Esophagus squamous epithelium (tissue), 5 donors: ENCODE measurements at regions of chr7 and their contacts with region 1.

Region 1: GRCh38 chr7:48109848-48110663 is 21.0 kb downstream of the UPP1 start:
- DNase-seq: peak; percentile 32
- H3K4me3 ChIP-seq: no peak overlapping the region
- H3K27ac ChIP-seq: peak overlapping the region in 1 of 4 donors; percentile 3
- H3K4me1 ChIP-seq: peaks cover 0 to 26% (median 4%) of the 10 kb centered on the region in 3 donors
- H3K27me3 ChIP-seq: no peaks in the 10 kb centered on the region
- CTCF ChIP-seq: peak; percentile 94 to 100 (median 99)
- POLR2A ChIP-seq: no peak

Region 2: DNA sequence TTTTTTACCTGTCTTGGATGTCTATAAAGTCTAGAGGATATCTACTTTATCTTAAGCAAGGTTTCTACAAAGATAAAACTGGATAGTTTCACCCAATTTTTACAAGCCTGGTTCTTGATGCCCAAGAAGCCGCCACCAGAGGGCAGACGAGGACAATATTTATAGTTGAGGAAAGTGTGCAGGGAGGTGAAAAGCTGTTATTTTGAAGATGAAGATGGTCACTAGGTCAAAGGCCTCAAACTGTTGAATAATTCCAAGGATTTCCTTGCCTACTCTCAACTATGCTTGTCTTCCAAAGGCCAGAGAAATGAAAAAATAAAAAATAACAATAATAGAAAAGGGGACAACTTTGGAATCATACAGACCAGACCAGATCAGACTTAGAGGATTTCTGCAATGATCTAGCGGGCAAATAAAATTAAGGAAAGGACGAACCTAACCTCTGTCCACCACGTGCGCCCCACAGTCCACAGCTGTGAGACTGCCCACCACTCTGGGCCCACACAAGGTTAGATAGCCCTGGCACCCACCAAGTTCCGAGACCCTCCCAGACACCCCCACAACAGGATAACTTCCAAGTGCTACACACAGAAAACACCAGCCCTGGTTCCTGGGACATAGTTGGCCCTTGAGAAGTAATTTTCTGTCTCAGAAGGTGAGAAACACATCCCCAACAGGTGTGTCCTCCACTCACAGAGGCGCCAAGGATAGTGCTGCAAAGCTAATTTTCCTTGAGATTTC is 164.6 kb before region 1 on chr7:
- intact Hi-C with region 1: loop called (anchors 5 kb)
- DNase-seq: no peak
- H3K4me3 ChIP-seq: no peak overlapping the region
- H3K27ac ChIP-seq: no peak overlapping the region
- H3K4me1 ChIP-seq: peaks cover 0 to 26% (median 9%) of the 10 kb centered on the region in 3 donors
- H3K27me3 ChIP-seq: no peaks in the 10 kb centered on the region
- CTCF ChIP-seq: peak; percentile 54 to 83 (median 76)
- POLR2A ChIP-seq: no peak

Region 3: DNA sequence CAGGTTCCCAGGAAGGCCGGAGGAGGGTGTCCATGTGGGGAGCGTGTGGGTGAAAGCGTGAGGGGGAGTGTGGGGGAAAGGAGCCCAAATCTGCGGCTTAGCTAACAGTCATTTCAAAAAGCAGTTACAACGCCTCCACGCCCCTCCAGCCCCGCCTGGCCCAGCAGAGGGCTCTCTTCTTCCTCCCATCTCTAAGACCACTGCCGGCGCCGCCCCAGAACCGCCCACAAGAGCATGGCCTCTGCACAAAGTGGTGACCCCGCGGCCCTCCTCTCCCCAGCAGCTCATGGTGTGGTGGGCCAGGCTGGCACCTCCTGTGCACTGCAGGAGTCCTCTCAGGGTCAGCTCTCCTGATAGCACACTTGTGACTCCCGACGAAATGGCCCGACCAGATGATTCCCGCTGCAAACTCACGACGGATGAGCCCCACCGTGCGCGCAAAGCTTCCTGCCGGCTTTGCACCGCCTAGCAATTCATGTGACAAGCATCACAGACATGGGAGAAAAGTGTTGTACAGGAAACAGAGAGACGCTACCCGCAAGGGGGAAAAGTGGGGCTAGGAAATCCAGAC is 118.2 kb before region 1 on chr7:
- intact Hi-C with region 1: loop called (anchors 10 kb)
- DNase-seq: peak; percentile 71
- H3K4me3 ChIP-seq: peak overlapping the region; percentile 27 to 71 (median 50)
- H3K27ac ChIP-seq: peak overlapping the region; percentile 31 to 70 (median 52)
- H3K4me1 ChIP-seq: peaks cover 0 to 18% (median 0%) of the 10 kb centered on the region in 3 donors
- H3K27me3 ChIP-seq: no peaks in the 10 kb centered on the region
- CTCF ChIP-seq: peak in 5 of 6 experiments; percentile 35 to 58 (median 51)
- POLR2A ChIP-seq: peak in 1 of 4 donors; percentile 15

Region 4: DNA sequence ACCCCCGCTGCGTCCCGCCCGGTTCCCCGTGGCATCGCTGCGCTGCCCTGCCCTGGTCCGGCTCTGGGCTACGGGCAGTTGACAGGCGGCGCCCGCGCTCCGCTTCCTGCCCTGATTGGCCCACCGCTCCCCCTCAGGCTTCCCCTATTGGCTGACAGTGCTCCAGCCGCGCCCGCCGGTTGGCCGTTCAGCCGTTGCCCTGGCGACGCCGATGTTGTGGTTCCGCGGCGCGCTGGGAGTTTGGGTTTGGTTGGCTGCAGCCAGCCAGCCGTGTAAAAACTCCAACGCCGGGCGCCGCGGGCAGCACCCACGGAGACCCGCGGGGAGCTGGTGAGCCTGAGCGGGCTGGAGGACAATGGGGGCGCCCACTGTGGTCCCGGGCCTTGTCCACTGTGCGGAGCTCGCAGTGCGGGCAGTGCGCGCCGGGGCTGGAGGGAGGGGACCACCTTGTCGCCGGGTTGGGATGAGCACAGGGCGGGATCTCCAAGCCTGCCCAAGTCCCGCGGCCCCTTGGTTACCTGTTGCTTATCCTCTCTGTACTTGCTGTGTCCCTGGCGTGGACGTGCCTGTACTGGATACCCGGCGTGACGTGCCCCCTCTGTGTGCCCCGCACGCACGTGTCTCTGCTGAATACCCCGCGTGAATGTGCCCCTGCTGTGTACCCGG is 74.6 kb before region 1 on chr7 and contains the start of gene C7orf57:
- intact Hi-C with region 1: loop called (anchors 10 kb)
- DNase-seq: peak; percentile 32
- H3K4me3 ChIP-seq: peak within 1 kb of the TSS; percentile 36 to 70 (median 55)
- H3K27ac ChIP-seq: no peak within 1 kb of the TSS
- H3K4me1 ChIP-seq: peaks cover 10 to 16% (median 11%) of the 10 kb centered on the region in 3 donors
- H3K27me3 ChIP-seq: peaks cover 0 to 48% (median 0%) of the 10 kb centered on the region in 4 donors
- CTCF ChIP-seq: peak in 2 of 6 experiments; percentile 7 to 19
- POLR2A ChIP-seq: no peak
- total RNA-seq, gene C7orf57: 0.57 to 2.3 (median 1.0) TPM

Region 5: GRCh38 chr7:48224042-48224441 is 114.0 kb after region 1 on chr7:
- intact Hi-C with region 1: no loop called
- DNase-seq: no peak
- H3K4me3 ChIP-seq: no peak overlapping the region
- H3K27ac ChIP-seq: no peak overlapping the region
- H3K4me1 ChIP-seq: no peaks in the 10 kb centered on the region
- H3K27me3 ChIP-seq: no peaks in the 10 kb centered on the region
- CTCF ChIP-seq: no peak
- POLR2A ChIP-seq: no peak